Right ventricle myocardium inferior (tissue), 1 donor: ENCODE measurements at regions of chr6 and their contacts with region 1.

Region 1: DNA sequence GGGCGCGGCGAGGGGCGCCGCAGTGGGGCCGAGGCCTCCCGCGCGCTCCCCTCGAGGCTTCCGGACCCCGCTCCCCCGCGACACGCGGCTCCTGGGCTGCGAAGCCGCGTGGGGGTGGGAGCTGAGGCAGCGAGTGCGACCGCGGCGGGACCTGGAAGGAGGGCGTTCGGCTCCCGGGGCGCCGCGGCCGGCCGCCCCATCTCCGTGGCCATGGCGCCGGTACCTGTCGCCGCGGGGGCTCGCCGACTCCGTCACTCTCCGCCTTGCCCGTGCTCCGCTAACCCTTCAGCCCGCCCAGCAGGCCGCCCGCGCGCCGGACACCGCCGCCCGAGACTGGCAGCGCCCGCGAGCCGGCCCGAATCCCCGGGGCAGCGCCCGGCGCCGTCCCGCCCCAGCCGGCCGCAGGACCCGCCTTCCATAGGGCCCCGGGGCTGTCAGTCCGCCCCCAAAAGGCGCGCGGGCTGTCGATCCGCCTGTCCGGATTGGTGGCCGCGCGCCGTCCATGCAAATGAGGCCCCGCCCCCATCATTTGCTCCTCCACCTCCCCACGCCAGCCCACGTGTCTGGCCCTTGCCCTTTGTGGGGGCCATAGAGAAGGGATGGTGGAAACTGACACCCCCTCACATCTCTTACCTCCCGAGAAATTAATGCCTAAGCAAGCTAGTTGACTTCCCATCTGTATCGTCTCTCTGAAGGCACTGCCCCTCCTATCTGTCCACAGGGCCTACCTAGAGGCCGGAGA is at the start of gene FKBP5:
- DNase-seq: peak; percentile 99
- ATAC-seq: peak; percentile 91
- total RNA-seq, gene FKBP5: 101 TPM

Region 2: GRCh38 chr6:35402136-35402855 is 286.5 kb before region 1 on chr6:
- intact Hi-C with region 1: no loop called
- DNase-seq: no peak
- ATAC-seq: no peak

Region 3: DNA sequence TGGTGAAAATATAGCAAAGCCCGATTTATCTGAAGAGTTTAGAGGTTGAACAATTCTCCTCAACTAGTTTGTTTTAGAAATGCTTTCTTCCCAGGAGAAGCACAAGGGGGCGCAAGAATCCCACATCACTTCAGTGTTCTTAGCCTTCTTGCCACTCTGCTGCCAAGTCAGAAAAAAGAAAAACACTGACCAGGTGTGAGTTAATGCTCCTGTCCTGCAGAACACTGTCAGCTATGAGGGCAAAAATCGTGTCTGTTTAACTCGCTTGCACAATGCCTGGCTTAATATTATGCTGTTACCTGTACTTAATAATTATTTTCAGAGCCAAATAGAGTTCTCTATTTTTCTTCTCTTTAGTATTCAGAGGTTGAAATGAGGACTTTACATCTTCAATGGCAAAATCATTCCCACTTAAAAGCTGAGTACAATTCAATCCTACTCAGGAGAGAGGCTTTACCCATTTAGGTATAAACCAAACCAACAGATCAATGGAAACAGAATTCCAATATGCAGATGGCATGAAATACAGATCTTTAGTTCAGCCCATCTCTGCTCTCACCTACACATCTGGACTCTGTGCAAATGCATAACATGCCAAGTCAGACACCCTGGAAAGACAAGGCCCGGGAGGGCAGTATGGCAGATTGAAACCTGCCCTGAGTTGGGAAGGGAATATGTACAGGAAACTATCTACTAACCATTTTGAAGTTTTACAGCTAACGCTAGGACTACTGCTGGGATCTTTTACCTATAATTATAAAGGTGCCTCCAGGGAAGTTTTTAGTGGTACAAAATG is 104.7 kb before region 1 on chr6:
- intact Hi-C with region 1: loop called (anchors 5 kb)
- DNase-seq: no peak
- ATAC-seq: peak; percentile 69

Region 4: DNA sequence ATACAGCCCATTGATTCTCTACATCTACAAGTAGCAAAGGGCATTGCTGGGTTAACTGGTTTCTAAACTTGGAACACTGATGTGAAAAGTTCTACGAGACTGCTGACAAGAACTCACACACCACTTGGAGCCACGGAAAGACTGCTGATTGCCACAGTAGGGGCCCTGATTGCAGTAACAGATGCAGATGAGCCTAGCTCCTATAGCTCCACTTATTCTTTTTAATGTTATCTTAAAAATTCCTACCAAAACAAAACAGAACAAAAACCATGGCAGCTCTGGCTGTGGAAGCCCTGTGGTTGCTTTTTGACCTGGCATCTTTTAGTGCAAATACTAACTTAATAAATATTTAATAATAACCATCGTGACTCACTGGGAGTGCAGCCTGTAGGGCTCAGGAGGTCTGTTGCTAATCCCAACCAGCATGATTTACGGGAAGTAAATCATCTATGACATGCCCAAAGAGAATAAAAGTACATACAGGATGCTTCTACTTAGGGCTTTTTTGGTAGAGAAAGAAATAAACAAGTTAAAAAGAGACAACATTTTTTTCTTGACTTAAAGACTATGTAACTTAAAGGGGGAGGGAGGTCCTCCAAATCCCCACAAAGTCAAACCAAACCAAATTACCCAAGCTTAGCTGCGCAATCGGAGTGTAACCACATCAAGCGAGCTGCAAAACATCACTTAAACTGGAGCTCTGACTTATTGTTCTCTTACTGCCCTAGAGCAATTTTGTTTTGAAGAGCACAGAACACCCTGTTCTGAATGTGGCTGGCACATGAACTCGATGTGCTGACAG is 87.2 kb before region 1 on chr6:
- intact Hi-C with region 1: loop called (anchors 2 kb)
- DNase-seq: no peak
- ATAC-seq: peak; percentile 91

Region 5: GRCh38 chr6:35722121-35722761 is 33.5 kb after region 1 on chr6:
- intact Hi-C with region 1: loop called (anchors 1 kb)
- DNase-seq: peak; percentile 84
- ATAC-seq: peak; percentile 35